H1 (cell line): ENCODE measurements at regions of chr4 and their contacts with region 1.

Region 1: GRCh38 chr4:3880615-3881120 is 114.5 kb downstream of the ADRA2C start:
- DNase-seq: peak; percentile 60 to 95
- H3K4me3 ChIP-seq: peak overlapping the region in 3 of 4 experiments; percentile 20 to 53 (median 32); a peak in 2 of 8 replicates
- H3K27ac ChIP-seq: no peak overlapping the region
- H3K4me1 ChIP-seq: peaks cover 0 to 10% (median 6%) of the 10 kb centered on the region in 4 experiments; a peak in 6 of 7 replicates
- H3K27me3 ChIP-seq: peaks cover 0 to 11% (median 9%) of the 10 kb centered on the region in 4 experiments; a peak in 6 of 7 replicates
- CTCF ChIP-seq: peak in 2 of 3 experiments; percentile 78 to 86; a peak in 3 of 4 replicates
- EP300 ChIP-seq: no peak
- POLR2A ChIP-seq: no peak
- RAD21 ChIP-seq: peak; percentile 92 to 94

Region 2: GRCh38 chr4:3773552-3774001 is 107.1 kb before region 1 on chr4:
- CTCF ChIA-PET with region 1: interaction called, 41 read pairs
- POLR2A ChIA-PET with region 1: no interaction called
- DNase-seq: no peak
- H3K4me3 ChIP-seq: no peak overlapping the region
- H3K27ac ChIP-seq: no peak overlapping the region
- H3K4me1 ChIP-seq: peaks cover 0 to 5% (median 0%) of the 10 kb centered on the region in 4 experiments; a peak in 3 of 7 replicates
- H3K27me3 ChIP-seq: peaks cover 0 to 5% (median under 1%) of the 10 kb centered on the region in 4 experiments; a peak in 3 of 7 replicates
- CTCF ChIP-seq: no peak
- EP300 ChIP-seq: no peak
- POLR2A ChIP-seq: no peak
- RAD21 ChIP-seq: no peak

Region 3: GRCh38 chr4:3791978-3792542 is 88.6 kb before region 1 on chr4:
- CTCF ChIA-PET with region 1: interaction called, 69 read pairs
- POLR2A ChIA-PET with region 1: interaction called, 4 read pairs
- DNase-seq: peak; percentile 47 to 95
- H3K4me3 ChIP-seq: no peak overlapping the region
- H3K27ac ChIP-seq: no peak overlapping the region
- H3K4me1 ChIP-seq: peaks cover 0 to 3% (median 0%) of the 10 kb centered on the region in 4 experiments; a peak in 2 of 7 replicates
- H3K27me3 ChIP-seq: no peaks in the 10 kb centered on the region; a peak in 1 of 7 replicates
- CTCF ChIP-seq: no peak
- EP300 ChIP-seq: no peak
- POLR2A ChIP-seq: no peak
- RAD21 ChIP-seq: peak in 1 of 2 experiments; percentile 31; a peak in 2 of 4 replicates

Region 4: DNA sequence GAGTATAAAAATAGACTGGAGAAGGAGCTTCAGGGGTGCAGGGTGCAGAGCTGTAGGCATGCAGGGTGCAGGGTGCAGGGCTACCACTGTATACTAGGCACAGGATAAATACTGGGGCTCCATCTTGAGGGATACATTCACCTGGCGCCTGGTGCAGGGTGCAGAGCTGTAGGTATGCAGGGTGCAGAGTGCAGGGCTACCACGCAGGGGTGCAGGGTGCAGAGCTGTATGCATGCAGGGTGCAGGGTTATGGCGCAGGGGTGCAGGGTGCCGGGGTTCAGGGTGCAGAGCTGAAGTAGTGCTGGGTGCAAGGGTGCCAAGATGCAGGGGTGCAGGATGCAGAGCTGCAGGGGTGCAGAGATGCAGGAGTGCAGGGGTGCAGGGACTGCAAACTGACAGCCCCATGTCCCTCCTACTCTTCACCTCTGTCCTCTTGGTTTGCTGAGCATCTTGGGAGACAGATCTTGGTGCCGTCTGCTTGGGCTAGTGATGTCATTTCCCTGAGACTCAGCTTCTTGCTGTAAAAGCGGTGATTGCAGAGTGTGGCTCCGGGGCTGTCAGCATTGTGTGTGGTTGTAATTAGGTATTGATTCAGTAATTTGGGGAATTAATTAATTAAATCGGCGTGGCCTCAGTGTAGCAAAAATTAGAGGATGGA is 23.3 kb before region 1 on chr4:
- CTCF ChIA-PET with region 1: interaction called, 38 read pairs
- POLR2A ChIA-PET with region 1: interaction called, 9 read pairs
- DNase-seq: no peak
- H3K4me3 ChIP-seq: no peak overlapping the region
- H3K27ac ChIP-seq: no peak overlapping the region
- H3K4me1 ChIP-seq: peaks cover 0 to 13% (median 8%) of the 10 kb centered on the region in 4 experiments; a peak in 5 of 7 replicates
- H3K27me3 ChIP-seq: no peaks in the 10 kb centered on the region; a peak in 1 of 7 replicates
- CTCF ChIP-seq: no peak
- EP300 ChIP-seq: no peak
- POLR2A ChIP-seq: no peak
- RAD21 ChIP-seq: no peak

Region 5: DNA sequence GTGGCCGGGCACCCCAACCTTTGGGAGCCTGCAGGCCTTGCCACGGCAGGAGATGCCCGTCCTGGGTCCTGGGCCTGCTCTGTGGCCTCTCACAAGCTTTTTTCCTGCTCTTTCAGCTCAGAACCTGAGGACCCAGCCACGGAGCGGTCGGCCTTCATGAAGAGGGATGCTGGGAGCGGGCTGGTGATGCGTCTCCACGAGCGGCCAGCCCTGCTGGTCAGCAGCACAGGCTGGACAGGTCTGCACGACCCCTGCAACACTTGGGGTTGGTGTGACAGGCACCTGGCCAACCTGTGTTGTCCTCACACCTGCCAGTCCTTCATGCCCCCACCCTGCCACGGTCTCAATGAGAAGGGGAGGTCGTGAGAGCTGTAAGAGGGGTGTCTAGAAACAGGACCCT is 55.5 kb after region 1 on chr4:
- CTCF ChIA-PET with region 1: interaction called, 19 read pairs
- POLR2A ChIA-PET with region 1: no interaction called
- DNase-seq: no peak
- H3K4me3 ChIP-seq: no peak overlapping the region
- H3K27ac ChIP-seq: no peak overlapping the region
- H3K4me1 ChIP-seq: peaks cover 0 to 4% (median 3%) of the 10 kb centered on the region in 4 experiments; a peak in 4 of 7 replicates
- H3K27me3 ChIP-seq: no peaks in the 10 kb centered on the region
- CTCF ChIP-seq: no peak
- EP300 ChIP-seq: no peak
- POLR2A ChIP-seq: no peak
- RAD21 ChIP-seq: no peak